ENCODE measurements at regions of chr21 and their contacts with region 1.

Region 1: GRCh38 chr21:33380483-33380998 is 22.7 kb upstream of the IFNGR2 start:
- DNase-seq: peak; percentile 98
- H3K4me3 ChIP-seq: no peak overlapping the region
- H3K27ac ChIP-seq: peak overlapping the region; percentile 95
- H3K4me1 ChIP-seq: peaks cover 48% of the 10 kb centered on the region
- H3K27me3 ChIP-seq: no peaks in the 10 kb centered on the region
- CTCF ChIP-seq: no peak

Region 2: GRCh38 chr21:33169359-33169758 is 211.2 kb before region 1 on chr21:
- CTCF ChIA-PET with region 1: no interaction called
- dilution Hi-C with region 1: no loop called
- in situ Hi-C with region 1: no loop called
- intact Hi-C with region 1: no loop called
- DNase-seq: no peak
- H3K4me3 ChIP-seq: no peak overlapping the region
- H3K27ac ChIP-seq: no peak overlapping the region
- H3K4me1 ChIP-seq: no peaks in the 10 kb centered on the region
- H3K27me3 ChIP-seq: peaks cover 3% of the 10 kb centered on the region
- CTCF ChIP-seq: no peak

Region 3: GRCh38 chr21:33393348-33393747 is 12.8 kb after region 1 on chr21:
- CTCF ChIA-PET with region 1: no interaction called
- dilution Hi-C with region 1: no loop called
- in situ Hi-C with region 1: no loop called
- intact Hi-C with region 1: loop called (anchors 1 kb)
- DNase-seq: no peak
- H3K4me3 ChIP-seq: no peak overlapping the region
- H3K27ac ChIP-seq: no peak overlapping the region
- H3K4me1 ChIP-seq: peaks cover 15% of the 10 kb centered on the region
- H3K27me3 ChIP-seq: no peaks in the 10 kb centered on the region
- CTCF ChIP-seq: no peak

Region 4: DNA sequence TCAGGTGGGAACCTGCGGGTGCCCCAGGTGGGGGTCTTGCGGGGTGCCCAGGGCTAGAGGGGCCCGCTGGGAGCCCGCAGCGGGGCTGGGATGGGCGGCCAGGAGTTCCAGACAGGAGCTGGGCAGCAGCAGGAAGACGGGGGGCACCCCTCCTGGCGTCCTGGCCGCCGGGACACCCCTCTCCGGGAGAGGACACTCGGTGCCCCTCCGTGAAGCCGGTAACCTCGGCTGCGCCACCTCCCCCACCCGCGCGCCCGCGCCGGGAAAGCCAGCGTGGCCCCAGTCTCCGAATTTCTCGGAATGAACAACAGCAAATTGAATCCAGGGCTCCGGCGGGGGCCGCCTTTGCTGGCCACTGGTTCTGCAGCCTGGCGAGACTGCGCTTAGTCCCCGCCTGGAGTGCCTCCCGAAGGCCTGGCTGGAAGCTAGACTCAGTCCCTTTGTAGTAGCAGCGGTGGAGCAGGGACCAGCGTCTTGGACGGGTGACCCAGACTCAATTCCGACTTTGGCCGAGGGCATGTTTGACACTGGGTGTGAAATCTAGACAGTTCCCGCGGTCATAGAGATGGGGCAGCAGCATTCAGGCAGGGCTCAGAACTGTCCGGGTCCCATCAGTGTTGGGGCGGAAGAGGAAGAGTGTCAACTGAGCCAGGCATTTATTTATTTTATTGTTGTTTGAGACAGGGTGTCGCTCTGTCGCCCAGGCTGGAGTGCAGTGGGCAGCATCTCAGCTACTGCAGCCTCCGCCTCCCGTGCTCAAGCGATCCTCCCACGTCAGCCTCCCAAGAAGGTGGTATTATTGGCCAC is 23.4 kb after region 1 on chr21:
- CTCF ChIA-PET with region 1: no interaction called
- dilution Hi-C with region 1: no loop called
- in situ Hi-C with region 1: no loop called
- intact Hi-C with region 1: loop called (anchors 2 kb)
- DNase-seq: peak; percentile 49
- H3K4me3 ChIP-seq: peak overlapping the region; percentile 63 to 97 (median 83)
- H3K27ac ChIP-seq: peak overlapping the region; percentile 89
- H3K4me1 ChIP-seq: peaks cover 17% of the 10 kb centered on the region
- H3K27me3 ChIP-seq: no peaks in the 10 kb centered on the region
- CTCF ChIP-seq: no peak

Region 5: DNA sequence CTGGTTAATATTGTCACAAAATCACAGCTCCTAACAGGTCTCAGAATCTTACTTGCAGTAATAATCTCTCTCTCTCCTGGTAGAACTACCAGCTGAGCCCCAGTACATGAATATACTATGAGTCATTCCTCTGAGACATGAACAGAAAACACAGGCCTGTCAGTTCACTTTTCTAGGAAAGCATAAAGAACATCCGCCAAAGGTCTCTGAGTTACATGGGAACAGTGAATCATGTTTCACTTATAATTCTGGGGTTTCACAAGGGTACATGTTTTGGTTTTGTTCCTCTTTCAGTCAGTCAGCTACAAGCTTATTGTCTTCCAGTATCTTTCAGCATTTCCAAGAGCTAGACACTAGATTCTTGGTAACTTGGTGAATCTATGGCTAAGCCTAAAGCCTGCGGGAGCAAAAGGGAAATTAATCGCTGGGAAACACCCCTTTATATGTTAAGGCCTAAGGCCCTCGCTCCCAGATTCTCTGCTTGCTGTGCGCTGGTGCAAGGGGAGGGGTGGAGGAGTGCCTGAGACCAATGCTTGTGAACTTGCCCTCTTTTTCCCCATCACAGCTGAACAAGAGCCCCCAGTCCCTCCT is 54.3 kb after region 1 on chr21:
- CTCF ChIA-PET with region 1: no interaction called
- dilution Hi-C with region 1: no loop called
- in situ Hi-C with region 1: no loop called
- intact Hi-C with region 1: loop called (anchors 1 kb)
- DNase-seq: peak; percentile 97
- H3K4me3 ChIP-seq: peak overlapping the region in 1 of 3 experiments; percentile 4
- H3K27ac ChIP-seq: peak overlapping the region; percentile 90
- H3K4me1 ChIP-seq: peaks cover 25% of the 10 kb centered on the region
- H3K27me3 ChIP-seq: no peaks in the 10 kb centered on the region
- CTCF ChIP-seq: no peak

Measured in mammary epithelial cell (primary cell).